CD4-positive, alpha-beta T cell (primary cell): ENCODE measurements at regions of chr11 and their contacts with region 1.

Region 1: DNA sequence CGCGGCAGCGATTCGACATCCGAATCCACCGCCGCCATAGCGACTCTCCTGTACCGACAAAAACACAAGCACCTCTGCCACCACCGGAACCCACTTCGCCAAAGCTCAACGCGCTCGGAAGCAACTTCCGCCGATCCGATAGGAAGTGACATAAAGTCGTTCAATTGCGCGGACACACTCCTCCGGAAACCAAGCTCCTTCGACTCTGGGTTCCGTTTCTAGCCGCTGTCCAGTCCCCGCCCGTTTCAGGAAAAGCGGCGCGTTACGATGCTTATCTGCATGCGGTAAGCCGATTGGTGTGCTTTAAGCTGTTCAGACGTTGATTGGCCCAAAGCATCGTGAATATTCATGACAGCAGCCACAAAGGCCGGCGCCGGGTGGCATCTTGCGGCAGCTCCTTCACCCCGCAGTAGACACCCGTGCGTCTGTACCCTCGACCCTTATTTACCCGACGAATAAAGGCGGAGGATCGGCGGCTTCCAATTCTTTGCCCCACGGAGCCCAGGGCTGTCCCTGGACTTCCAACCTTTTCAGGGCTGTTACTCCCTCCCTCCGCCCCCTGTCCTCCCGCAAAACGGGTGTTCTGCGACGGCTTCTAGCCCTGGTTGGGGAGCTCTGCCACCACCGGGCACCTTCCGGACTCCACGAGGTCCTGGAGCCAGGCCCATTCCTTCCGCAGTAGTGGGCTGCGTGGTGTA is at the start of gene TUT1:
- DNase-seq: peak; percentile 91 to 99 (median 95)
- ATAC-seq: peak; percentile 82
- H3K4me3 ChIP-seq: peak within 1 kb of the TSS; percentile 98
- H3K4me3 Mint-ChIP-seq: peak within 1 kb of the TSS; percentile 91
- H3K27ac ChIP-seq: peak within 1 kb of the TSS; percentile 95 to 97
- H3K27ac Mint-ChIP-seq: peak within 1 kb of the TSS; percentile 89
- H3K4me1 ChIP-seq: peaks cover 43% of the 10 kb centered on the region
- H3K4me1 Mint-ChIP-seq: peaks cover 72% of the 10 kb centered on the region
- H3K27me3 ChIP-seq: no peaks in the 10 kb centered on the region
- H3K27me3 Mint-ChIP-seq: no peaks in the 10 kb centered on the region
- CTCF ChIP-seq: no peak
- total RNA-seq, gene TUT1: 25.5 to 26.2 TPM

Region 2: DNA sequence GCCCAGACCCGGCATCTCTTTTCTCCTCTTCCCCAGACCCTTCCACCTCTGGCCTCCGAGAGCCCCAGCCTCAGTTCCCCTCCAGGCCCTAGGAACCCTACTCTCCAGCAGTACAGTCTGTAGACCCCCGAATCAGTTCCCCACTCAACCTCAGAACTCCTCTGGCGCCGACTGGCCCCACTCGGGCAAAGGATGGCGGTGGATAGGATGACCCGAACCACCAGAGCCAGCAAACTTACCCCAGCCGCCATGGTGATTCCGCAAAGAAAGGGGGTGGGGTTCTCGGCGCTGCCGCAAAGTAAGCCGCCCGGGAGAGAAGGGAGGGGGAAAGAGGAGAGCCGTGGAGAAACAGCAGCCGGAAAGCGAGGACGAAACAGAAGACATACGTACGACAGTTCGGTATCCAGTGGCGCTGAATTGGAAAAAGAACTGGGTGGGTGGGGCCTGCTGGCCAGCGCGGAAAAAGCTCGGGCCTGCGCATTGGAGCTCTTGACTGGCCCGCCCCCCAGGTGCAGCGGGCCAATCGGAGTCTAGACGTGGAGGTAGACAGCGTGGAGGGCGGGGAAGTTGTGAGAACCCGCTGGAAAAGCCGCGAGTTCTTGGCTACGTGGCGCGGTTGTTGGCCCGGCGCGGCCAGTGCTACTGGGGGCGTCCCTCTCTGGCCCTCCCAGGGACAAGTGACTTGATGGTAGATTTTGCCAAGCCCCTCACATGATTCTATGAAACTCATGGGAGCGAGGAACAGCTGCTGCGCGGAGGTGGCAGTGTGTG is 17.8 kb before region 1 on chr11 and contains the start of gene EEF1G:
- CTCF ChIA-PET with region 1: interaction called, 10 read pairs
- POLR2A ChIA-PET with region 1: interaction called, 127 read pairs
- intact Hi-C with region 1: loop called (anchors 1 to 2 kb)
- DNase-seq: peak; percentile 95 to 100 (median 97)
- ATAC-seq: peak; percentile 94
- H3K4me3 ChIP-seq: peak within 1 kb of the TSS; percentile 82
- H3K4me3 Mint-ChIP-seq: peak within 1 kb of the TSS; percentile 93
- H3K27ac ChIP-seq: peak within 1 kb of the TSS; percentile 76 to 83
- H3K27ac Mint-ChIP-seq: peak within 1 kb of the TSS; percentile 89
- H3K4me1 ChIP-seq: peaks cover 48% of the 10 kb centered on the region
- H3K4me1 Mint-ChIP-seq: peaks cover 55% of the 10 kb centered on the region
- H3K27me3 ChIP-seq: no peaks in the 10 kb centered on the region
- H3K27me3 Mint-ChIP-seq: no peaks in the 10 kb centered on the region
- CTCF ChIP-seq: no peak
- total RNA-seq, gene EEF1G: 2,181 to 2,269 TPM

Region 3: GRCh38 chr11:62632492-62632891 is 40.9 kb after region 1 on chr11:
- CTCF ChIA-PET with region 1: no interaction called
- POLR2A ChIA-PET with region 1: interaction called, 16 read pairs
- intact Hi-C with region 1: no loop called
- DNase-seq: no peak
- ATAC-seq: no peak
- H3K4me3 ChIP-seq: no peak overlapping the region
- H3K4me3 Mint-ChIP-seq: no peak overlapping the region
- H3K27ac ChIP-seq: no peak overlapping the region
- H3K27ac Mint-ChIP-seq: peak overlapping the region; percentile 30
- H3K4me1 ChIP-seq: peaks cover 27% of the 10 kb centered on the region
- H3K4me1 Mint-ChIP-seq: peaks cover 19% of the 10 kb centered on the region
- H3K27me3 ChIP-seq: no peaks in the 10 kb centered on the region
- H3K27me3 Mint-ChIP-seq: no peaks in the 10 kb centered on the region
- CTCF ChIP-seq: no peak

Region 4: DNA sequence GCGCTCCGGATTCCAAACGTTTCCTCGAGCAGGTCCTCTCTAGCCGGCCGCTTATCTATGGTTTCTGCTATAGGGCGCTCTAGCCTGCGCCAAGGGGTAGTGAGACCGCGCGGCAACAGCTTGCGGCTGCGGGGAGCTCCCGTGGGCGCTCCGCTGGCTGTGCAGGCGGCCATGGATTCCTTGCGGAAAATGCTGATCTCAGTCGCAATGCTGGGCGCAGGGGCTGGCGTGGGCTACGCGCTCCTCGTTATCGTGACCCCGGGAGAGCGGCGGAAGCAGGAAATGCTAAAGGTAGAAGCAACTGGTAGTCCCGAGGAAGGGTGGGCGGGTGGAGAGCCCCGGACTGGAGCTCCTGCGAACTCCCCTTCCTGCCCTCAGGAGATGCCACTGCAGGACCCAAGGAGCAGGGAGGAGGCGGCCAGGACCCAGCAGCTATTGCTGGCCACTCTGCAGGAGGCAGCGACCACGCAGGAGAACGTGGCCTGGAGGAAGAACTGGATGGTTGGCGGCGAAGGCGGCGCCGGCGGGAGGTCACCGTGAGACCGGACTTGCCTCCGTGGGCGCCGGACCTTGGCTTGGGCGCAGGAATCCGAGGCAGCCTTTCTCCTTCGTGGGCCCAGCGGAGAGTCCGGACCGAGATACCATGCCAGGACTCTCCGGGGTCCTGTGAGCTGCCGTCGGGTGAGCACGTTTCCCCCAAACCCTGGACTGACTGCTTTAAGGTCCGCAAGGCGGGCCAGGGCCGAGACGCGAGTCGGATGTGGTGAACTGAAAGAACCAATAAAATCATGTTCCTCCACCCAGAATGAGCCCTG is 80.2 kb after region 1 on chr11 and contains the starts of genes LBHD1 and UQCC3:
- CTCF ChIA-PET with region 1: interaction called, 4 read pairs
- POLR2A ChIA-PET with region 1: interaction called, 155 read pairs
- intact Hi-C with region 1: loop called (anchors 5 kb)
- DNase-seq: peak; percentile 50 to 89 (median 68)
- ATAC-seq: peak; percentile 74
- H3K4me3 ChIP-seq: peak within 1 kb of the TSS; percentile 98
- H3K4me3 Mint-ChIP-seq: peak within 1 kb of the TSS; percentile 91
- H3K27ac ChIP-seq: peak within 1 kb of the TSS; percentile 72 to 83
- H3K27ac Mint-ChIP-seq: peak within 1 kb of the TSS; percentile 87
- H3K4me1 ChIP-seq: peaks cover 55% of the 10 kb centered on the region
- H3K4me1 Mint-ChIP-seq: peaks cover 53% of the 10 kb centered on the region
- H3K27me3 ChIP-seq: no peaks in the 10 kb centered on the region
- H3K27me3 Mint-ChIP-seq: no peaks in the 10 kb centered on the region
- CTCF ChIP-seq: no peak
- total RNA-seq, gene LBHD1: 10.4 to 10.5 TPM
- total RNA-seq, gene UQCC3: 1.5 to 2.3 TPM

Region 5: GRCh38 chr11:62726915-62727763 is 135.5 kb after region 1 on chr11 and contains the start of gene HNRNPUL2:
- CTCF ChIA-PET with region 1: interaction called, 5 read pairs
- POLR2A ChIA-PET with region 1: interaction called, 90 read pairs
- intact Hi-C with region 1: no loop called
- DNase-seq: peak; percentile 96 to 100 (median 98)
- ATAC-seq: peak; percentile 80
- H3K4me3 ChIP-seq: peak within 1 kb of the TSS; percentile 65
- H3K4me3 Mint-ChIP-seq: peak within 1 kb of the TSS; percentile 93
- H3K27ac ChIP-seq: peak within 1 kb of the TSS; percentile 93 to 97
- H3K27ac Mint-ChIP-seq: peak within 1 kb of the TSS; percentile 98
- H3K4me1 ChIP-seq: peaks cover 52% of the 10 kb centered on the region
- H3K4me1 Mint-ChIP-seq: peaks cover 73% of the 10 kb centered on the region
- H3K27me3 ChIP-seq: no peaks in the 10 kb centered on the region
- H3K27me3 Mint-ChIP-seq: no peaks in the 10 kb centered on the region
- CTCF ChIP-seq: no peak
- total RNA-seq, gene HNRNPUL2: 35.2 to 37.6 TPM

Region 6: DNA sequence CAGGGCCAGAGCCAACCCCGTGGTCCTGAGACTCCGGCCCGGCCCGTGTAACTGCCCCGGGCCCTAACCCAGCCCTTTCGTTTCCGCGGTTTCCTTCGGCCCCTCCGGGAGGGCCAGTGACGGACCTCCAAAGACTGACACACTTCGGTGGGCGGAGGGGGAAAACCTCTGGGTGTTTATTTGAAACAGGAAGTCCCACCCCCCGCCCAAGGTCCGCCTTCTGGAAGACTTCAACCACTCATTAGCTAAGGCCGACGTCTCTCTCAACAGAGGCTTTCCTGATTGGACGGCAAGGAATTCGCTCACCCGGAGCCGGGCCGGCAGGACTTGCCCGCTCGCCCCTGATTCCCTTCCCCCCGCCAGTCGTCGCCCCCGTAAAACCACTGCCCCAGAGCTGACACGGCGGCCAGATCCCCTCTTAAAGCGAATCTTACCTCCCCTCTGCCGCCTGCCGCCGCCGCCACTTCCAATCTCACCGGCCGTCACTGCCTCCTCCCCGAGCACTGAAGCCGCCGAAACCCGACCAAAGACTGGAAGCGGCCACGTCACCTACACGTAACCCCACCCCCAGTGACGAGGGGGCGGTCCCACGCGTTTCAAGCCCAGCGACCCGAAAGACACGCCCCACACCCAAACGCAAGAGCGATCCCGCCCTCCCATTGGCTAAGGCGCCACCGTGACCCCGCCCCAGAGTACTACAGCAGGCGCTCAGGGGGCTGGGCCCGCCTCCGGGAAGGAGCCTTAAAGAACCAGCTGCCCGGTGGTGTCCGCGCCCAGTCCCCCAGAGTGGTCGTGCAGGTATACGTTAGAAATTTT is 240.1 kb after region 1 on chr11 and contains the start of gene STX5:
- CTCF ChIA-PET with region 1: no interaction called
- POLR2A ChIA-PET with region 1: interaction called, 13 read pairs
- intact Hi-C with region 1: no loop called
- DNase-seq: peak; percentile 99 to 100 (median 99)
- ATAC-seq: peak; percentile 95
- H3K4me3 ChIP-seq: peak within 1 kb of the TSS; percentile 86
- H3K4me3 Mint-ChIP-seq: peak within 1 kb of the TSS; percentile 92
- H3K27ac ChIP-seq: peak within 1 kb of the TSS; percentile 95 to 97
- H3K27ac Mint-ChIP-seq: peak within 1 kb of the TSS; percentile 95
- H3K4me1 ChIP-seq: peaks cover 44% of the 10 kb centered on the region
- H3K4me1 Mint-ChIP-seq: peaks cover 40% of the 10 kb centered on the region
- H3K27me3 ChIP-seq: no peaks in the 10 kb centered on the region
- H3K27me3 Mint-ChIP-seq: no peaks in the 10 kb centered on the region
- CTCF ChIP-seq: no peak
- total RNA-seq, gene STX5: 93.1 to 104 TPM

Region 7: GRCh38 chr11:62880803-62881578 is 289.4 kb after region 1 on chr11 and contains the start of gene SLC3A2:
- CTCF ChIA-PET with region 1: interaction called, 18 read pairs
- POLR2A ChIA-PET with region 1: interaction called, 27 read pairs
- intact Hi-C with region 1: loop called in 1 of 2 experiments (anchors 2 kb)
- DNase-seq: peak; percentile 61 to 94 (median 82)
- ATAC-seq: peak; percentile 74
- H3K4me3 ChIP-seq: peak within 1 kb of the TSS; percentile 99
- H3K4me3 Mint-ChIP-seq: peak within 1 kb of the TSS; percentile 93
- H3K27ac ChIP-seq: peak within 1 kb of the TSS; percentile 95 to 98
- H3K27ac Mint-ChIP-seq: peak within 1 kb of the TSS; percentile 100
- H3K4me1 ChIP-seq: peaks cover 47% of the 10 kb centered on the region
- H3K4me1 Mint-ChIP-seq: peaks cover 52% of the 10 kb centered on the region
- H3K27me3 ChIP-seq: no peaks in the 10 kb centered on the region
- H3K27me3 Mint-ChIP-seq: no peaks in the 10 kb centered on the region
- CTCF ChIP-seq: peak; percentile 86
- total RNA-seq, gene SLC3A2: 231 to 234 TPM